Activated T-helper 2 cell treated with anti-CD3 and anti-CD28 coated beads, Interferon-gamma antibody, Interleukin-2, Interleukin-4, amounts not matched to agents 10 μg/mL and 5 μg/mL and 100 μg/mL, durations not matched to agents 14 hours and 24 hours and 36 hours (primary cell): ENCODE measurements at regions of chr18 and their contacts with region 1.

Region 1: GRCh38 chr18:32930695-32931301 is 158.0 kb upstream of the KLHL14 start:
- DNase-seq: no peak
- H3K4me3 Mint-ChIP-seq: no peak overlapping the region
- H3K27ac Mint-ChIP-seq: no peak overlapping the region
- H3K4me1 Mint-ChIP-seq: no peaks in the 10 kb centered on the region
- H3K27me3 Mint-ChIP-seq: no peaks in the 10 kb centered on the region

Region 2: GRCh38 chr18:32714571-32715148 is 216.1 kb before region 1 on chr18:
- intact Hi-C with region 1: loop called (anchors 10 kb)
- DNase-seq: no peak
- H3K4me3 Mint-ChIP-seq: no peak overlapping the region
- H3K27ac Mint-ChIP-seq: no peak overlapping the region
- H3K4me1 Mint-ChIP-seq: no peaks in the 10 kb centered on the region
- H3K27me3 Mint-ChIP-seq: no peaks in the 10 kb centered on the region

Region 3: DNA sequence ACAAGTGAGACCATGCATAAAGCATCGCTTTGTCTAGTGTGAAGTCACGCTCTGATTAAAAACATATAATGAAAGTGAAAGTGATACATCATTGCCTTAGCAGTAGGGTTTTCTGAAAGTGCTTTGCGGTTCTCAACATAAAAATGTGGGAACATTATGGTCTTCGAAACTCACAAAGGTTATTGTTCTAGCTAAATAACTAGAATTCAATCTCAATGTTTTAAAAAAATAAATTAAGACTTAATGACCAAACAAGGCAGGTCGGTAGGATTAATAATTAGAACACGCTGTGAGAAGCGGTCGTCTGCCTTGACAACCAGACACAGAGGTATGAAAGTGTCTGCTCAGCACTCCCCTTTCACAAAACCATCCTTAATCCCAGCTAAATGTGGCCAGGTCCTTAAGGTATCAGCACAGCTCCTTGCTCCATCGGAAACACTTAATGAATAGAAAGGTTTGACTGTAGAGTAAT is 200.1 kb before region 1 on chr18:
- intact Hi-C with region 1: no loop called
- DNase-seq: no peak
- H3K4me3 Mint-ChIP-seq: no peak overlapping the region
- H3K27ac Mint-ChIP-seq: no peak overlapping the region
- H3K4me1 Mint-ChIP-seq: peaks cover 5% of the 10 kb centered on the region
- H3K27me3 Mint-ChIP-seq: peaks cover 4% of the 10 kb centered on the region